ENCODE measurements at regions of chr18 and their contacts with region 1.

Region 1: DNA sequence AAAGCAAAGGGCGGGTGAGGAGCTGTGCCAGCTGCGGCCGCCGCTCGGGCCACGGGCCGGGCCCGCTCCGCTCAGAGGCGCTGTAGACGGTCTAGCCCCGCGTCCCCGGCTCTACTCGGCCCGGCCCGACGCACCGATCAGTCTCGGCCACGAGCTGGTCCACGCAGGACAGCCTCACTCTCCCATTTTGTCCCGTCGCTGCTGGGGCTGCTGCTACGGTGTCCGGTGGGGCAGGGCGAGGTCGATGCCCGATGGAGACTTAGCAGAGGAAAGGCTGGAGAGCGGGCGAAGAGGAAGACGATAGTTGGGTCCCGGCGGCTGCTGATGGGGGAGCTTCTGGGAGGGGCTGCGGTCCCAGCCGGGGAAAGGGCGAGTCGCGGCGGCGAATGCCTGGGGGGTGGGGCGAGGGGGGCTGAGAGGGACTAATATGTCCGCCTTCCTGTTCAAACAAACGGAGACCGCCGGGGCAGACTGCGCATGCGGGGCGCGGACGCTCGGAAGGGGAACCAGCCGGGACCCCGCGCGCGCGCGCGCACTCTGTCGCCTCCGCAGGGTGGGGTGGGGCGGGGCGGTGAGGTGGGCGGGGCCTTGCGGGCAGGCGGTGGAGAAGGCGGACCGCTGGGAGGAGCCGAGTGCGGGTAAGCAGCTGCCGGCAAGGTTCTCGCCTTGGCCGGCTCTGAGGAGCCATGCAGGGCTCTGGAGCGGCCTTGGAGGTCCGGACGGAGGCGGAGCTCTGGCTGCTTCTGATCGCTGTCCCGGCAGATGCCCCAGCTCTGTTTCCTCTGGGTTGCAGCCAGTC is at the start of gene ROCK1:
- DNase-seq: peak; percentile 95 to 99 (median 97)
- H3K4me3 ChIP-seq: peak within 1 kb of the TSS; percentile 90 to 96
- H3K4me3 Mint-ChIP-seq: peak within 1 kb of the TSS in 1 of 8 donors; percentile 97
- H3K27ac ChIP-seq: peak within 1 kb of the TSS; percentile 95
- H3K27ac Mint-ChIP-seq: peak within 1 kb of the TSS; percentile 88 to 96 (median 93)
- H3K4me1 ChIP-seq: peaks cover 41% of the 10 kb centered on the region
- H3K4me1 Mint-ChIP-seq: peaks cover 7 to 14% (median 11%) of the 10 kb centered on the region in 4 donors
- H3K27me3 ChIP-seq: no peaks in the 10 kb centered on the region
- H3K27me3 Mint-ChIP-seq: no peaks in the 10 kb centered on the region
- total RNA-seq, gene ROCK1: 80.7 to 82.8 TPM

Region 2: GRCh38 chr18:21051620-21052019 is 59.9 kb before region 1 on chr18:
- CTCF ChIA-PET with region 1: no interaction called
- POLR2A ChIA-PET with region 1: interaction called, 3 read pairs
- intact Hi-C with region 1: loop called (anchors 2 kb)
- DNase-seq: no peak
- H3K4me3 ChIP-seq: no peak overlapping the region
- H3K4me3 Mint-ChIP-seq: peak overlapping the region in 1 of 8 donors; percentile 0
- H3K27ac ChIP-seq: no peak overlapping the region
- H3K27ac Mint-ChIP-seq: peak overlapping the region in 6 of 7 donors; percentile 3 to 80 (median 39)
- H3K4me1 ChIP-seq: peaks cover 65% of the 10 kb centered on the region
- H3K4me1 Mint-ChIP-seq: peaks cover 36 to 60% (median 48%) of the 10 kb centered on the region in 4 donors
- H3K27me3 ChIP-seq: no peaks in the 10 kb centered on the region
- H3K27me3 Mint-ChIP-seq: no peaks in the 10 kb centered on the region

Region 3: DNA sequence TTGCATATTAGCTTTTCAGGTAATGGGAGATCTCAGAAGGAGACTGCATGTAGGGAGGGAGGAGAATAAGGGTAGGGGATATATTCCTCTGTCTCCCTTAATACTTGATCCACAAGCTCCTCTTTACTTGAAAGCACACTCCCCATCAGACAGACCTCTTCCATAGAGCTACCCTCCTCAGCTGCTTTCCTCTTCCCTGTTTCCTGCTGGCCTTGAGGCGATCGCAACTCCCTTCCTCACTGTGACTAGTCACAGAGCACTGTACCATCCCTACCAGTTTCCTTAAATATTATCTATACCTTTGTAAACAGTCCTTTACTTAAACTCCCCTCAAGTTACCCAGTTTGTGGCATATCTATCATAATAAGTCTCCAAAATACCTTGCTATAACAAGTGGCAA is 10.9 kb before region 1 on chr18:
- CTCF ChIA-PET with region 1: no interaction called
- POLR2A ChIA-PET with region 1: interaction called, 8 read pairs
- intact Hi-C with region 1: loop called (anchors 1 kb)
- DNase-seq: no peak
- H3K4me3 ChIP-seq: no peak overlapping the region
- H3K4me3 Mint-ChIP-seq: peak overlapping the region in 6 of 8 donors; percentile 20 to 73 (median 54)
- H3K27ac ChIP-seq: no peak overlapping the region
- H3K27ac Mint-ChIP-seq: peak overlapping the region in 4 of 7 donors; percentile 19 to 89 (median 44)
- H3K4me1 ChIP-seq: peaks cover 86% of the 10 kb centered on the region
- H3K4me1 Mint-ChIP-seq: peaks cover 58 to 75% (median 71%) of the 10 kb centered on the region in 4 donors
- H3K27me3 ChIP-seq: no peaks in the 10 kb centered on the region
- H3K27me3 Mint-ChIP-seq: no peaks in the 10 kb centered on the region

Region 4: GRCh38 chr18:21179590-21180220 is 68.2 kb after region 1 on chr18:
- CTCF ChIA-PET with region 1: interaction called, 4 read pairs
- POLR2A ChIA-PET with region 1: no interaction called
- intact Hi-C with region 1: loop called (anchors 10 kb)
- DNase-seq: peak in 4 of 5 donors; percentile 22 to 37 (median 28)
- H3K4me3 ChIP-seq: no peak overlapping the region
- H3K4me3 Mint-ChIP-seq: no peak overlapping the region
- H3K27ac ChIP-seq: no peak overlapping the region
- H3K27ac Mint-ChIP-seq: no peak overlapping the region
- H3K4me1 ChIP-seq: no peaks in the 10 kb centered on the region
- H3K4me1 Mint-ChIP-seq: peaks cover 0 to 19% (median 5%) of the 10 kb centered on the region in 4 donors
- H3K27me3 ChIP-seq: no peaks in the 10 kb centered on the region
- H3K27me3 Mint-ChIP-seq: no peaks in the 10 kb centered on the region

Region 5: GRCh38 chr18:21704603-21705364 is 593.2 kb after region 1 on chr18 and contains the start of gene ABHD3:
- CTCF ChIA-PET with region 1: no interaction called
- POLR2A ChIA-PET with region 1: interaction called, 4 read pairs
- intact Hi-C with region 1: loop called (anchors 5 kb)
- DNase-seq: peak; percentile 90 to 93 (median 92)
- H3K4me3 ChIP-seq: peak within 1 kb of the TSS; percentile 82 to 92
- H3K4me3 Mint-ChIP-seq: peak within 1 kb of the TSS; percentile 97 to 99 (median 98)
- H3K27ac ChIP-seq: peak within 1 kb of the TSS; percentile 81
- H3K27ac Mint-ChIP-seq: peak within 1 kb of the TSS; percentile 94 to 96 (median 95)
- H3K4me1 ChIP-seq: peaks cover 24% of the 10 kb centered on the region
- H3K4me1 Mint-ChIP-seq: peaks cover 19 to 44% (median 30%) of the 10 kb centered on the region in 4 donors
- H3K27me3 ChIP-seq: no peaks in the 10 kb centered on the region
- H3K27me3 Mint-ChIP-seq: no peaks in the 10 kb centered on the region
- total RNA-seq, gene ABHD3: 63.0 to 65.6 TPM

Measured in CD4-positive, alpha-beta memory T cell (primary cell).